IMR-90 (cell line): ENCODE measurements at regions of chr10 and their contacts with region 1.

Region 1: GRCh38 chr10:76192694-76193320 is 761.4 kb downstream of the LRMDA start:
- DNase-seq: peak; percentile 83
- ATAC-seq: peak; percentile 86
- H3K4me3 ChIP-seq: no peak overlapping the region
- H3K27ac ChIP-seq: peak overlapping the region; percentile 92
- H3K4me1 ChIP-seq: peaks cover 26% of the 10 kb centered on the region
- H3K27me3 ChIP-seq: no peaks in the 10 kb centered on the region
- CTCF ChIP-seq: no peak
- POLR2A ChIP-seq: no peak
- RAD21 ChIP-seq: no peak

Region 2: GRCh38 chr10:76251841-76252671 is 59.2 kb after region 1 on chr10:
- CTCF ChIA-PET with region 1: no interaction called
- POLR2A ChIA-PET with region 1: no interaction called
- dilution Hi-C with region 1: no loop called
- in situ Hi-C with region 1: no loop called
- intact Hi-C with region 1: loop called (anchors 2 kb)
- DNase-seq: peak; percentile 93
- ATAC-seq: peak; percentile 84
- H3K4me3 ChIP-seq: no peak overlapping the region
- H3K27ac ChIP-seq: no peak overlapping the region
- H3K4me1 ChIP-seq: peaks cover 3% of the 10 kb centered on the region; the same call in 1 of the 2 replicates
- H3K27me3 ChIP-seq: no peaks in the 10 kb centered on the region
- CTCF ChIP-seq: no peak
- POLR2A ChIP-seq: no peak
- RAD21 ChIP-seq: no peak